A673 (cell line): ENCODE measurements at regions of chr21 and their contacts with region 1.

Region 1: DNA sequence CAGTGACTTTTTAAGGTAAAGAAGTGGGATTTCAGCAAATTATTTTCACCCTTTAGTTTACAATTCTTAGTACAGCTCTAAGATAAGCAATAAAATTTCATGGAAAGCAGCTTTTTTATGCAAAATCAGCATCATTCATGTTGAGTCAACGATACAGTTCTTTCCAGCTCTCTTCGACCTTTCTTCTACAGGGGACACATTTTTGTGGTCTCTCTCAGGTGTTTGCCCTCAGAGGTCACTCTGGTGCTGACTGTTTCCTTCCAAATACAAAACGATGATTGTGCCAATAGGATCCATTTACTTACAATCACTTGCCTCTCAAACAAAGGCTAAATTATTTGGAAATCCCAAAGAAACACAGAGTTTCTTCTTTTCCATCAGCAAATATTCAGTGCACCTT is 51.0 kb downstream of the PSMG1 start:
- DNase-seq: no peak
- H3K4me3 ChIP-seq: no peak overlapping the region
- H3K27ac ChIP-seq: no peak overlapping the region
- H3K4me1 ChIP-seq: no peaks in the 10 kb centered on the region
- H3K27me3 ChIP-seq: no peaks in the 10 kb centered on the region
- CTCF ChIP-seq: no peak

Region 2: DNA sequence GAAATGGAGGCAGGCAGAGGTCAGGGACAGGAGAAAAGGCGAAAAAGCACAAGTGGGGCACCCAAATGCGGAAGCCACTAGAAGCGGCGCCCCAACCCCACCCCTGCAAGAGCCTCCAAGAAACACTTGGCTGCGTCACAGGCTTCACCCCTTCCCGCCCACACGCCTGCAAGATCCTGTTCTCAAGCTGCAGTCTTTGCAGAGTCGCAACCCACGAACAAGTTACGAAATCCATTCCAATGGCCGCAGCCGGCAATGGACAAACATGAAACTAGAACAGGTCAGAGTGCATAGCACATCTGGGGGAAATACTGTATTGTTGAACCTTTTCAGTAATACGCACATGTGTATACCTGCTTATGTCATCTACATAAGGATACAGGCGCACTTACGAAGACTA is 52.6 kb before region 1 on chr21:
- CTCF ChIA-PET with region 1: no interaction called
- POLR2A ChIA-PET with region 1: interaction called, 10 read pairs
- intact Hi-C with region 1: no loop called
- DNase-seq: no peak
- H3K4me3 ChIP-seq: no peak overlapping the region
- H3K27ac ChIP-seq: no peak overlapping the region
- H3K4me1 ChIP-seq: no peaks in the 10 kb centered on the region
- H3K27me3 ChIP-seq: peaks cover 16% of the 10 kb centered on the region
- CTCF ChIP-seq: no peak